ENCODE measurements at regions of chr4 and their contacts with region 1.

Region 1: GRCh38 chr4:153466081-153466948 is at the start of gene TMEM131L:
- DNase-seq: peak; percentile 71
- ATAC-seq: peak; percentile 77
- H3K4me3 Mint-ChIP-seq: peak within 1 kb of the TSS; percentile 96
- H3K27ac Mint-ChIP-seq: peak within 1 kb of the TSS; percentile 95
- H3K4me1 Mint-ChIP-seq: peaks cover 39% of the 10 kb centered on the region
- H3K27me3 Mint-ChIP-seq: no peaks in the 10 kb centered on the region
- total RNA-seq, gene TMEM131L: 54.9 to 58.4 TPM

Region 2: DNA sequence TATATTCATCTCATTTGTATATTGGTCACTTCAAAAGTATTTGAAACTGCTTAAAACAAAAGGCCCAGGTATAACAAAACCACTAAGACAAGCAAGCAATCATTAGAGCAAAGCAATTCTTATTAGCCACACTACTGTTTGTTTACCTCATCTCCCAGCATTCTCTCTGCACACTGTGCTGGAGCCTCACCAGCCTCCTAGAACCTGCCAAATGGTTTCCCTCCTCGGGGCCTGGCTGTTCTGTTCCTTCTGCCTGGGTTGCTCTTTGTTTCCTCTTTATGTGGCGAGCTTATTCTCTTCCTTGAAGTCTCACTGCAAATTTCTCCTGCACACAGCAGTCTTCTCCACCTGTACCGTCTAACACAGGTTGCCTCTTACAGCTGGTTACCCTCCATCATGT is 189.3 kb before region 1 on chr4:
- CTCF ChIA-PET with region 1: no interaction called
- POLR2A ChIA-PET with region 1: no interaction called
- DNase-seq: no peak
- ATAC-seq: no peak
- H3K4me3 Mint-ChIP-seq: no peak overlapping the region
- H3K27ac Mint-ChIP-seq: no peak overlapping the region
- H3K4me1 Mint-ChIP-seq: peaks cover 5% of the 10 kb centered on the region
- H3K27me3 Mint-ChIP-seq: peaks cover 12% of the 10 kb centered on the region

Region 3: GRCh38 chr4:153426207-153426885 is 40.0 kb before region 1 on chr4:
- CTCF ChIA-PET with region 1: interaction called, 42 read pairs
- POLR2A ChIA-PET with region 1: interaction called, 10 read pairs
- DNase-seq: peak; percentile 54
- ATAC-seq: peak; percentile 79
- H3K4me3 Mint-ChIP-seq: peak overlapping the region; percentile 55
- H3K27ac Mint-ChIP-seq: peak overlapping the region; percentile 90
- H3K4me1 Mint-ChIP-seq: peaks cover 72% of the 10 kb centered on the region
- H3K27me3 Mint-ChIP-seq: no peaks in the 10 kb centered on the region

Region 4: DNA sequence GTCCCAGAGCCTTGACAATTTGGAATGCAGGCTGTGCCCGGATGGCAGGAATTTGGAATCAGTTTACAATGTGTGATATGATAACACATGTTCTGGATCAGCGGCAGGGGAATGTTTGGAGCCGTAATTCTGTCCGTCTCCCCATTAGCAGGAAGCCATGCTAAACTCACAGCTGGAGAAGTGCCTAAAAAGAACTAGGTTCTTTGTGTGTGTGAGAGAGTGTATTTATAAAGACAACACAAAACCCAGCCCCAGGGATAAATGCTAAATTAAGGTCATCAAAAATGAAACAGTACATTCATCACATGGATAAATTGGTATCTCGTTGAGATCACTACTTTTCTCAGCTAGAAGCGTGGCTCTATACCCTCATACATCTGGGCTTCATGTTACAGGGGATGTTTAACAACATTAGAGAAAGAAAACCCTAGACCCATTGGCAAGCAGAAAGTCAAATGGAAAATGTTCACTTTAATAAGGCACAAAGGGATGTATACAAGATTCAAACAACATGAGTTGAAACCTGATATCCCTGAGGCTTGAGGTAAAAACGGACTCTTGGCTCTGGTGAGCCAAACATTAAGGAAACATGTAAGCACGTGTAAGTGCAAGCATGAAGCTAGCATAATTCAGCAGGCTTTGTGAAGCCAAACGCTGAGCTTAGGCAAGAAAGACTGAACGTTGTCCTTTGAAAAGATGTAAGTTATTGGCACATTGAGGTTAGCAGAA is 18.1 kb before region 1 on chr4:
- CTCF ChIA-PET with region 1: interaction called, 41 read pairs
- POLR2A ChIA-PET with region 1: interaction called, 8 read pairs
- DNase-seq: no peak
- ATAC-seq: no peak
- H3K4me3 Mint-ChIP-seq: no peak overlapping the region
- H3K27ac Mint-ChIP-seq: no peak overlapping the region
- H3K4me1 Mint-ChIP-seq: peaks cover 38% of the 10 kb centered on the region
- H3K27me3 Mint-ChIP-seq: no peaks in the 10 kb centered on the region

Region 5: DNA sequence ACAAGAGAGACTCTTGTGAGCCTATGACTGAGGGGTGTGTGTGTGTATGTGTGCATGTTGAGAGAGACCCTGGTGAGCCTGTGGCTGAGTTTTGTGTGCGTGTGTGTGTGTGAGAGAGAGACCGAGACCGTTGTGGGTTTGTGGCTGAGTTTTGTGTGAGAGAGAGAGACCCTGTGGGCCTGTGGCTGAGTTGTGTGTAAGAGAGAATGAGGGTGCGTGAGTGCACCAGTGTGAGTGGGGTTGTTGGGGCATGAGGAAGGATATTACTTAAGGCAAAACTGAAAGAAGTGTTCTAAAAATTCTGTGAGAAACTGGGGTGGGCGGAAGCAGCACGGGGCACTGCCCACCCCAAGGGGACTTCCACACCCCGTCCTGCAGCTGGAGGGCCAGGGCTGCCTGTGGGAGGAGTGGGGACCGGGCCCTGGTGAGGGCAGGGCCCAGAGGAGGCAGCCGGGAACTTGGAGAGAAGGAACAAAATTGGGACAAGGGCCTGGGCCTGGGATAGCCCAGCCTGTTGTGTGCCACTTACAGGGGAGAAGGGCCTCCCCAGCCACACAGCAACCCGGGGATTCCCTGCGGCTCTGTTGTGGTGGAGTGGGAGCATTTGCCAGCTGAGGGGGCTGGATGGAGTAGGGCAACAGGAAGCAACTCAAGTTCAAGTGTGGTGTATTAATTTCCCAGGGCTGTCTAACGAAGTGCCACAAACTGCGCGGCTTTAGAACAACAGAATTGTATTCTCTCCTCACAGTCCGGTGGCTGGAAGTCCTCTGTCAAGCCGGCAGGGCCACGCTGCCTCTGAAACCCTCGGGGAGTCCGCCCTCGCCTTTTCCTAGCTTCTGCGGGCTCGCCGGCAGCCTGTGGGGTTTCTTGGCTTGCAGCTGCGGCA is 21.9 kb after region 1 on chr4:
- CTCF ChIA-PET with region 1: interaction called, 52 read pairs
- POLR2A ChIA-PET with region 1: interaction called, 38 read pairs
- DNase-seq: peak; percentile 79
- ATAC-seq: peak; percentile 60
- H3K4me3 Mint-ChIP-seq: peak overlapping the region; percentile 57
- H3K27ac Mint-ChIP-seq: peak overlapping the region; percentile 90
- H3K4me1 Mint-ChIP-seq: peaks cover 85% of the 10 kb centered on the region
- H3K27me3 Mint-ChIP-seq: no peaks in the 10 kb centered on the region

Region 6: GRCh38 chr4:153528705-153529485 is 62.6 kb after region 1 on chr4:
- CTCF ChIA-PET with region 1: interaction called, 30 read pairs
- POLR2A ChIA-PET with region 1: interaction called, 22 read pairs
- DNase-seq: no peak
- ATAC-seq: peak; percentile 55
- H3K4me3 Mint-ChIP-seq: peak overlapping the region; percentile 75
- H3K27ac Mint-ChIP-seq: peak overlapping the region; percentile 91
- H3K4me1 Mint-ChIP-seq: peaks cover 87% of the 10 kb centered on the region
- H3K27me3 Mint-ChIP-seq: no peaks in the 10 kb centered on the region

Measured in activated CD8-positive, alpha-beta T cell treated with anti-CD3 and anti-CD28 coated beads, Interleukin-2, amount 10 ng/mL, durations not matched to agents 7 days and 5 days (primary cell).